ENCODE measurements at regions of chr16 and their contacts with region 1.

Region 1: DNA sequence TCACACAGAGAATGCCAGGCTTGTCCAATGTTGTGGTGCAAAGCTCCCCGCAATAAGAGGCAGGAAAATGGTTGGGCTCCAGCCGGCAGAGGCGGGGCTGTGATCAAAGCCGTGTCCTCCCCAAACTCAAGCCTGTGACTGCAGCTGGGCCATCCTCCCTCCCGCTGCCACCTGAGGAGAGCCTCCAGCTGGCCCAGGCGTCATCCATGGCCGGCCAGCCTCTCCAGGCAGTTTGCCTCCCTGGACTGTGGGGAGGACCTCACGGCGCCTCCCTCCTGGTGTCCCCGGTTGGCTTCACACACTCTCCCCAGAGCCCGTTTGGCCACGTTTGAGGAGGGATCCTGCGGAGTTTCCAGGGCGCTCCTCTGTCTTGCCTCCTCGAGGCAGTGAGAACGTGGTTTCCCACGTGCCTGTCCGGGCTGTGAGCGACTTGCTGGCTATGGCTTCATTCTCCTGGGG is 134.1 kb downstream of the IRF8 start:
- DNase-seq: no peak
- CTCF ChIP-seq: no peak

Region 2: GRCh38 chr16:86044241-86044671 is 11.2 kb after region 1 on chr16:
- CTCF ChIA-PET with region 1: interaction called, 23 read pairs
- POLR2A ChIA-PET with region 1: no interaction called
- DNase-seq: peak; percentile 74
- CTCF ChIP-seq: peak; percentile 49